ENCODE measurements at regions of chr1 and their contacts with region 1.

Region 1: DNA sequence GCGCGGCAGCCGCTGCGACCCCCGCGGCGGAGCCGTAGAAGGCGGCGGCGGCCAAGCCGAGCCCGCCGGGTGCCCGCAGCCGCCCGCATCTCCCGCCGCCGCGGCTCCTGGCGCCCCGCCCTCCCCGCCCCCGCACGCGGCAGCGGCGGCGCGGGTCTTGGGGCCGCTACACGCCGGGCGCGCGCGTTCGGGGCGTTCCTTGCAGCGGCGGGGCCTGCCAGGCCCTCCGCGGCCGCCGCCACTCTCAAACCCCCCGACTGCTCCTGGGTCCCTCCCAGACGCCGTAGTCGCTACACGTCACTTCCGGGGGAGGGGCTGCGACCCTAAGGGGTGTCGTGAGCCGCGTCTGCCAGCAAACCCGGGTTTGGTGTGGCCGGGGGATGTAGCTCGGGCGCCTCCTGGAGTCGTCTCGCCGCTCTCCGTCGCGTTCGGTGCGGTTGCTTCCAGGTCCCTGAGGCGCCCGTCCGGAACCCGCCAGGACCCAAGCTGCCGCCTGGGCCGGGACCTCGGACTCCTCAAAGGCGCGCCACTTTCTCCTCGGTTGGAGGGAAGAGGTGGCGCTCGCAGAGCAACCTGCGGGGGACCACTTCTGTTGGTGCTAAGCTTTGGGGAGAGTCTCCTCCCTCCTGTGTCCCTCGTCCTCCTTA is at the start of gene ELK4:
- DNase-seq: peak; percentile 99 to 100 (median 99)
- ATAC-seq: peak; percentile 90
- H3K4me3 ChIP-seq: peak within 1 kb of the TSS; percentile 62
- H3K27ac ChIP-seq: peak within 1 kb of the TSS; percentile 93
- H3K4me1 ChIP-seq: peaks cover 15% of the 10 kb centered on the region in 2 experiments
- H3K27me3 ChIP-seq: no peaks in the 10 kb centered on the region
- CTCF ChIP-seq: peak; percentile 80 to 94 (median 91)
- EP300 ChIP-seq: peak; percentile 51
- POLR2A ChIP-seq: peak; percentile 93
- RAD21 ChIP-seq: peak; percentile 88 to 90
- polyA plus RNA-seq, gene ELK4: 2.0 to 3.1 TPM

Region 2: GRCh38 chr1:205645519-205645918 is 13.7 kb after region 1 on chr1:
- CTCF ChIA-PET with region 1: no interaction called
- POLR2A ChIA-PET with region 1: interaction called, 14 read pairs
- in situ Hi-C with region 1: no loop called
- intact Hi-C with region 1: no loop called
- DNase-seq: peak in 1 of 4 experiments; percentile 21
- ATAC-seq: peak; percentile 61
- H3K4me3 ChIP-seq: no peak overlapping the region
- H3K27ac ChIP-seq: no peak overlapping the region
- H3K4me1 ChIP-seq: peaks cover 6 to 8% of the 10 kb centered on the region in 2 experiments; a peak in 4 of 5 replicates
- H3K27me3 ChIP-seq: no peaks in the 10 kb centered on the region
- CTCF ChIP-seq: no peak
- EP300 ChIP-seq: no peak
- POLR2A ChIP-seq: no peak
- RAD21 ChIP-seq: no peak

Region 3: DNA sequence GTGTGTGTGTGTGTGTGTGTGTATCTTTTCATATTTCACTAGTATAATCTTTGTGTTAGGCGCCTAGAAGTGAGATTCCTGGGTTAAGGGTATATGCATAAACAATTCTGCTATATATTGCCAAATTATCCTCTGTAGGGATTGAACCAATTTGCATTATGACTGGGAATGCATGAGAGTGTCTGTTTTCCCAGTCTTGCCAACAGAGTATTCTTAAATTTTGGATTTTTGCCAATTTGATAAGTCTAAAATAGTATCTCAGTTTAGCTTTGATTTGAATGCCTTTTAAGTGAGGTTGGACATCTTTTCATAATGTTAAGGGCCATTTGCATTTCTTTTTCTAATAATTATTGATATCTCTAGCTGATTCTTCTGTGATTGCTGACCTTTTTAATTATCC is 493.5 kb after region 1 on chr1:
- CTCF ChIA-PET with region 1: no interaction called
- POLR2A ChIA-PET with region 1: no interaction called
- in situ Hi-C with region 1: no loop called
- intact Hi-C with region 1: no loop called
- DNase-seq: no peak
- ATAC-seq: no peak
- H3K4me3 ChIP-seq: no peak overlapping the region
- H3K27ac ChIP-seq: no peak overlapping the region
- H3K4me1 ChIP-seq: no peaks in the 10 kb centered on the region
- H3K27me3 ChIP-seq: peaks cover 13 to 28% of the 10 kb centered on the region in 2 experiments; a peak in 4 of 5 replicates
- CTCF ChIP-seq: no peak
- EP300 ChIP-seq: no peak
- POLR2A ChIP-seq: no peak
- RAD21 ChIP-seq: no peak

Measured in K562 (cell line).